PC-9 (cell line): ENCODE measurements at regions of chr18 and their contacts with region 1.

Region 1: GRCh38 chr18:21740724-21741510 is at the start of gene MIB1:
- DNase-seq: no peak
- H3K4me3 ChIP-seq: peak within 1 kb of the TSS; percentile 80
- H3K27ac ChIP-seq: peak within 1 kb of the TSS; percentile 72
- H3K4me1 ChIP-seq: peaks cover 4% of the 10 kb centered on the region; the same call in 1 of the 2 replicates
- H3K27me3 ChIP-seq: no peaks in the 10 kb centered on the region
- CTCF ChIP-seq: no peak
- total RNA-seq, gene MIB1: 40.1 and 40.3 TPM in 2 replicates

Region 2: GRCh38 chr18:21345840-21346239 is 395.1 kb before region 1 on chr18:
- CTCF ChIA-PET with region 1: no interaction called
- POLR2A ChIA-PET with region 1: interaction called, 15 read pairs
- intact Hi-C with region 1: no loop called
- DNase-seq: no peak
- H3K4me3 ChIP-seq: no peak overlapping the region
- H3K27ac ChIP-seq: no peak overlapping the region
- H3K4me1 ChIP-seq: peaks cover 12% of the 10 kb centered on the region
- H3K27me3 ChIP-seq: no peaks in the 10 kb centered on the region
- CTCF ChIP-seq: no peak

Region 3: DNA sequence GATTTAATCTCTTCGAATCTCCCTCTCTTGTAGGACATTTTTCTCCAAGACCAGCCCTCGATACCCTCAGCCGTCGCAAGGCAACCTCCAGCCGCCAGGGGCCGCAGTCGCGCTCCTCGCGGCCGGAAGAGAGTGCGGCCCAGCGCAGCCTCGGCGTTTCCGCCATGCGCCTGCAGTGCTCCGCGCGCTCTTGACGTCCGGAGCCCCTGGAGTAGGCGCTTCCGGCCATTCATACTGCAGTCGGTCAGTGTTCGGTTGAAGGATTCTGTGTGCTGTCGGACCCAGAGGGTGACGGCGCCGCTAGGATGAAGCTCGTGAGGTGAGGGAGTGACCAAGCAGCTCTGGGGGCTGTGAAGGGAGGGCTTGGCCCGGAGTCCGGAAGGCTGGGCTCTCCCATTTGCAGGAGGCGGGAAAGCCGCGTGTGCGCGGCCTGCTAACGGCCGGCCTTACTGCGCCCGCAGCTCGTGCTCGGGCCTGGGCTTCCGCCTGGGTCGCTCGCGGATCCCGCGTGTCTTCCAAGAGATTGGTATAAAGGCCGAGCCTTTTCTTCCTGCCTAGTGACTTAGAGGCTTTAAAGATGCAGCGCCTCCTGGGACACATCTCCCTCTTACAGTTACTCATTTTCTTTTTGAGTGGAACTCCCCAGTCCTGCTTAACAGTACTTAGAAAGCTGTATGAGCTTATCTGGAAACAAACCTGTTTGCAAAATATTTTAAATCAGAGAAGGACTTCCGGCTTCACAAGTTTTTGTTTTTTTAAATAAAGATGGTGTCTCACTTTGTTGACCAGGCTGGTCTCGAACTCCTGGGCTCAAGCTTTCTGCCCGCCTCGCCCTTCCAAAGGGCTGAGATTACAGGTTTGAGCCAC is 128.6 kb before region 1 on chr18 and contains the start of gene SNRPD1:
- CTCF ChIA-PET with region 1: no interaction called
- POLR2A ChIA-PET with region 1: no interaction called
- intact Hi-C with region 1: loop called (anchors 10 kb)
- DNase-seq: peak; percentile 69 to 87
- H3K4me3 ChIP-seq: peak within 1 kb of the TSS; percentile 83
- H3K27ac ChIP-seq: peak within 1 kb of the TSS; percentile 75
- H3K4me1 ChIP-seq: peaks cover 12% of the 10 kb centered on the region; the same call in 1 of the 2 replicates
- H3K27me3 ChIP-seq: no peaks in the 10 kb centered on the region
- CTCF ChIP-seq: peak; percentile 80
- total RNA-seq, gene SNRPD1: 56.0 and 57.6 TPM in 2 replicates

Region 4: DNA sequence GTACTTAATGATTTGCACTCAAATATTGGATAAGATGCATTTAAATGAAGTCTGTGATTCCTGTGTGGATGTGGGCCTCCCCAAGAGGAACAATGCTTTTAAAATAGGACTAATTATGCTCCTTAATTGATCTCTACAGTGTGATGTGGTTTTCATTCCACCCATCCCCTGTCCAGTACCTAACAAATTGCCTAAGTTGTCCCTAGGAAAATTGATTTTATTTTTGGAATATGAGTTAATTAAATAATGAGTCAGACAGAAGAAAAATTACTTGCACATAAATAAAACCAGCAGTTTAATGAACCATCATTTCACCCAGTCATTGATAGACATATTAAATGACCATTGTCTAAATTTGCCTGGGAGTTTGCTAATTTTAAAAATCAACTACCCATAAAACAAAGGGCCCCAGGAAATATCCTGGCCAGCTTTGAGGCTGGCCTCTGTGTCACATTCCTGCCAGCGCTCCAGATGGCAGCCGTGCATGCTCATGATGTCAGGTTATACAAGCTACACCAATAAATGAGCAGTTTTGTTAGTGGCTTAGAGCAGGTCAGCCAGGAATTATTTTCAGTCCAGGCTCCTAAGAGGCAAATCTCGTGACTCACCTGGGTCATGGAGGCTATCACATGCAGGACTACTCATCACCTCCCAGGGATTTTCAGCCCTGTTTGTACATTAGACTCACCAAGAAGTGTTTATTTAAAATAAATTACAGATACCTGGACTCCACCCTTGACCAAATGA is 68.2 kb before region 1 on chr18:
- CTCF ChIA-PET with region 1: no interaction called
- POLR2A ChIA-PET with region 1: no interaction called
- intact Hi-C with region 1: loop called (anchors 10 kb)
- DNase-seq: peak; percentile 62 to 94
- H3K4me3 ChIP-seq: no peak overlapping the region
- H3K27ac ChIP-seq: peak overlapping the region; percentile 91
- H3K4me1 ChIP-seq: peaks cover 79% of the 10 kb centered on the region
- H3K27me3 ChIP-seq: no peaks in the 10 kb centered on the region
- CTCF ChIP-seq: no peak